BJ (cell line): ENCODE measurements at regions of chr10 and their contacts with region 1.

Region 1: GRCh38 chr10:122504610-122504950 is 43.2 kb downstream of the HTRA1 start:
- DNase-seq: peak; percentile 51
- H3K4me3 ChIP-seq: no peak overlapping the region
- H3K27me3 ChIP-seq: no peaks in the 10 kb centered on the region
- CTCF ChIP-seq: no peak

Region 2: DNA sequence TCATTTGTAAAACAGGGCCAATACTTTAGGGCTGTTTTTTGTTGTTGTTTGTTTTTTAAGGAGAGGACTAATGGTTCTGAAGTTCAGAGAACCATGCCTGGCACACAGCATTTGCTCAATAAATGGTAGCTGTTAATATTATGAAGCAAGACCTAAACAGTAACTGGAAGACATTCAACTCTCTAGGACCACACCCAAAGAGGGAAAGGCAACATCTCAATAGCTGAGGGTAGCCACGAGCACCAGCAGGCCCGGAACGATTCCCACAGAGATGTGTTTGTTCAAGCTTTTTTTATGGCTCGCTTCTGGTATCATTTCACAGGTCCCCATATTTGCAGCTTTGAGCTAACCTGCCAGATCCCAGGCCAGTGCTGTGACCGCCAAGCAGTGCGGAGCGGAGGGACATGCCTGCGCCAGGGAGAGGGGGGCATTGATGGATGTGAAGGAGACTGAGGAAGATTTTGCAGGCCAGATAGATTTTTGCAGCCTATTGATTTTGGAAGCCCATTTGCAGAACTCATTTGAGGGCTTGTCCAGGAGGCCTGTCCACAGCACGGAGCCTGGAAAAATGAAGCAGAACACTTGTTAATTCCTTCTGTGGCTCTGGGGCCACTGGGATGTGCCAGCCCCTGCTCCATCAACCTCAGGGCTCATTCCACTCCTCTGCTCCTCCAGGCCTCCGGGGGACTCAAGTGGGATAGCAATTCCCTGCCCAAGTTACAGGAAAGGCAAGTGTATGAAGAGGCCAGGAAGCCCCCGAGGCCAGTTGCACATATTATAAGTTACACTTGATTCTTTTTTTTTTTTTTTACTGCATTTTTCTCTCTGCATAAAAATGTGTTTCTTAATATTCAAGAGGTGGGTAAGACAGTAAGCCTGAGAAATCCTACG is 849.1 kb before region 1 on chr10:
- CTCF ChIA-PET with region 1: no interaction called
- POLR2A ChIA-PET with region 1: no interaction called
- DNase-seq: no peak
- H3K4me3 ChIP-seq: no peak overlapping the region
- H3K27me3 ChIP-seq: no peaks in the 10 kb centered on the region
- CTCF ChIP-seq: no peak

Region 3: GRCh38 chr10:123229927-123230632 is 725.5 kb after region 1 on chr10:
- CTCF ChIA-PET with region 1: no interaction called
- POLR2A ChIA-PET with region 1: interaction called, 14 read pairs
- DNase-seq: no peak
- H3K4me3 ChIP-seq: no peak overlapping the region
- H3K27me3 ChIP-seq: no peaks in the 10 kb centered on the region
- CTCF ChIP-seq: no peak